ENCODE measurements at regions of chr5 and their contacts with region 1.

Region 1: GRCh38 chr5:65481635-65482295 is at the start of gene ADAMTS6:
- DNase-seq: peak; percentile 85
- H3K4me3 ChIP-seq: peak within 1 kb of the TSS; percentile 35 to 57 (median 44)
- H3K27ac ChIP-seq: peak within 1 kb of the TSS; percentile 79 to 90 (median 86)
- H3K4me1 ChIP-seq: peaks cover 0 to 29% (median 12%) of the 10 kb centered on the region in 4 donors
- H3K27me3 ChIP-seq: no peaks in the 10 kb centered on the region
- CTCF ChIP-seq: no peak
- EP300 ChIP-seq: peak; percentile 54
- POLR2A ChIP-seq: no peak
- total RNA-seq, gene ADAMTS6: 0.96 to 2.2 (median 1.1) TPM in 3 of 4 donors, not detected in the other

Region 2: DNA sequence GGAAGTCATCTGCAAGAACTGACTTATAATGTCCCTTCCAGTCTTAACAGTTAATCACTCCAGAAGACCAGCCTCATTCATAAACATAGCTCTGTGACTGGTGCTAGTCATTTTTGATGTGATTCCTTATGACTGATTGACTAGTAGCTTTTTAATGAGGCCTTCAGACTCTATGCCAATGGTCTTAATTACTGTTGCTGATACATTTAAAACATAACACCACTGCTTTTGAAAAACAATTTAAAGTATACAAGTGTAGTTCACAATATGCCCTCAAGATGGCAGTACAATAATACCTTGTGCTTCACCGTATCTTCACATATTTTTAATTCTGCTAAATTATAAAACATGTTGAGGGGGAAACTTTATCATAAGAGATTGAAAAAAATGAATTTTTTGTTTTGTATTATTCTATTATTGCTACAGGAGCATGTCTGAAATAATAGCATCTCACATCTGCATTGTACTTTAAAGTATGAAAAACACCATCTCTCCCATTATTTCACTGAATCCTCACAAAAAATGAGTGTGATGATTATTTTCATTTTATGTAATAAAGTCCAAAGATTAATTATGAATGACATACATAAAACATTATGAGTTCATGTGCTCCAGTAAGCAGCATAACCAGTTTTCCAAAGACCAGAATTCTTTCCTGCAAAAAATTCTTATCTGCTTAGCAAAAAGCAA is 846.6 kb before region 1 on chr5:
- in situ Hi-C with region 1: loop called in 3 of 4 experiments (anchors 25 kb)
- intact Hi-C with region 1: no loop called
- DNase-seq: no peak
- H3K4me3 ChIP-seq: no peak overlapping the region
- H3K27ac ChIP-seq: no peak overlapping the region
- H3K4me1 ChIP-seq: no peaks in the 10 kb centered on the region
- H3K27me3 ChIP-seq: peaks cover 6% of the 10 kb centered on the region
- CTCF ChIP-seq: peak; percentile 73 to 83 (median 78)
- EP300 ChIP-seq: no peak
- POLR2A ChIP-seq: no peak

Region 3: DNA sequence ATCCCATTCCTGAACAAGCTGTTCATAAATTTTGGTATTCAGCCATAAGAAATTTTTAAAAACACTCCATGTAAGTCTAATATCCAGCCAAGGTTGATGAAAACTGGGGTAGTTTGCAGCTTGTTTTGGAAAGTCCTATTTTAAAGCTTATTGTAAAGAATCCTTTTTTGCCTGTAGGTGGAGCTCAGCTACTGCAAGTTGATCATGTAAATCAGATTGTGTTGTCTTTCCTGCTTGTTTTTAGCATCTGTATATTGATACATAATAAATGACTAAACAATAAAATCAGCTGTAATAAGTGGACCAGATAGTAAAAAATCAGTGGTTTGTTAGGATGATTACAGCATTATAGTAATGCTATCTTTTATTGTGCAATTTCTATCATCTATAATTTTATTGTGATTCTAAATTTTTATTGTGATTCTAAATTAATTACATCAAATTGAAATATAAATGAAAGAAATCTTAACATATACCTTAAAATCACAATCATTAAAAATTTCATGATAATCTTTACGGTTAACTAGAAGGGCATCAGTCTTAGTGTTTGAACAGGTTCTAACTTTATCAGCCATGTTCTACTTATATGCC is 670.6 kb before region 1 on chr5:
- in situ Hi-C with region 1: loop called (anchors 5 to 25 kb)
- intact Hi-C with region 1: loop called (anchors 5 kb)
- DNase-seq: no peak
- H3K4me3 ChIP-seq: no peak overlapping the region
- H3K27ac ChIP-seq: no peak overlapping the region
- H3K4me1 ChIP-seq: no peaks in the 10 kb centered on the region
- H3K27me3 ChIP-seq: no peaks in the 10 kb centered on the region
- CTCF ChIP-seq: peak; percentile 51 to 66 (median 62)
- EP300 ChIP-seq: no peak
- POLR2A ChIP-seq: no peak

Region 4: GRCh38 chr5:64818245-64818644 is 663.5 kb before region 1 on chr5:
- in situ Hi-C with region 1: loop called in 3 of 4 experiments (anchors 5 to 25 kb)
- intact Hi-C with region 1: loop called (anchors 5 kb)
- DNase-seq: no peak
- H3K4me3 ChIP-seq: no peak overlapping the region
- H3K27ac ChIP-seq: no peak overlapping the region
- H3K4me1 ChIP-seq: peaks cover 0 to 10% (median 0%) of the 10 kb centered on the region in 4 donors
- H3K27me3 ChIP-seq: no peaks in the 10 kb centered on the region
- CTCF ChIP-seq: no peak
- EP300 ChIP-seq: no peak
- POLR2A ChIP-seq: no peak

Region 5: DNA sequence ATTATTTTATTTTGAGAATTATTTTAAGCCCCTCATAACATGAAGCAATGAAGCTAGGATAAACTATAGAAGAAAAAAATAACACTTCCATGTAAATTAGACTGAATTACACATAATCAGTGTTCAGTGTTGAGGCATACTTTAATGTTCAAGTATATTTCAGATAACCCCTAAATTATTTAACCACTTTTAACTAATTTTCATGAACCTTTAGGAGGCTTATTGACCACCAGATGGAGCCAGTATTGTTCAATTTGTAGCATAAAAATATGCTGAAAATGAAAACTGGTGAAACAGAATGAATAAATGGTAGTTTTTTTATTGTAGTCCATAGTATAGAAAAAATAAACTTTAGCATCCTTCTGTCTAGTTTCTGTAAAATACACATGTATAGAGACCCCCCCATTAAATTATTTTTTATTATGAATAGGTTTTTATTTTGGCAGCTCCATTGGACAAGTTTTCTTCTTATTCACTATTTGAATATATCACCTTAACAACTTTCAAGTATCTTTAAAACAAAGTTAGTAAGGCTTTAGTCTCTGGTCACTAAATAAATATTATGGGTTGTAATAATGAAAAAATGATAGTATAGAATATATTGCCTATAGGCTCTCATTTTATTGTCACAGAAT is 522.9 kb before region 1 on chr5:
- in situ Hi-C with region 1: loop called in 2 of 4 experiments (anchors 25 kb)
- intact Hi-C with region 1: no loop called
- DNase-seq: no peak
- H3K4me3 ChIP-seq: no peak overlapping the region
- H3K27ac ChIP-seq: no peak overlapping the region
- H3K4me1 ChIP-seq: no peaks in the 10 kb centered on the region
- H3K27me3 ChIP-seq: no peaks in the 10 kb centered on the region
- CTCF ChIP-seq: peak in 4 of 5 experiments; percentile 37 to 51 (median 47)
- EP300 ChIP-seq: no peak
- POLR2A ChIP-seq: no peak

Region 6: GRCh38 chr5:65076251-65076869 is 405.4 kb before region 1 on chr5:
- in situ Hi-C with region 1: loop called in 2 of 4 experiments (anchors 25 kb)
- intact Hi-C with region 1: no loop called
- DNase-seq: peak; percentile 17
- H3K4me3 ChIP-seq: no peak overlapping the region
- H3K27ac ChIP-seq: peak overlapping the region in 2 of 4 donors; percentile 21 to 22
- H3K4me1 ChIP-seq: peaks cover 0 to 8% (median 0%) of the 10 kb centered on the region in 4 donors
- H3K27me3 ChIP-seq: no peaks in the 10 kb centered on the region
- CTCF ChIP-seq: peak in 2 of 5 experiments; percentile 14 to 17
- EP300 ChIP-seq: no peak
- POLR2A ChIP-seq: no peak

Region 7: GRCh38 chr5:65102828-65103711 is 378.7 kb before region 1 on chr5:
- in situ Hi-C with region 1: loop called in 3 of 4 experiments (anchors 25 kb)
- intact Hi-C with region 1: no loop called
- DNase-seq: peak; percentile 70
- H3K4me3 ChIP-seq: peak overlapping the region; percentile 60 to 84 (median 68)
- H3K27ac ChIP-seq: peak overlapping the region; percentile 80 to 94 (median 90)
- H3K4me1 ChIP-seq: peaks cover 0 to 14% (median 4%) of the 10 kb centered on the region in 4 donors
- H3K27me3 ChIP-seq: no peaks in the 10 kb centered on the region
- CTCF ChIP-seq: peak; percentile 21 to 35 (median 27)
- EP300 ChIP-seq: no peak
- POLR2A ChIP-seq: no peak